Aorta (tissue), 5 donors: ENCODE measurements at regions of chr3 and their contacts with region 1.

Region 1: GRCh38 chr3:68033867-68034266 is 379.5 kb upstream of the SUCLG2 start:
- DNase-seq: no peak
- ATAC-seq: no peak
- H3K4me3 ChIP-seq: no peak overlapping the region
- H3K27ac ChIP-seq: no peak overlapping the region
- H3K4me1 ChIP-seq: peaks cover 3% of the 10 kb centered on the region in 2 donors
- H3K27me3 ChIP-seq: no peaks in the 10 kb centered on the region

Region 2: DNA sequence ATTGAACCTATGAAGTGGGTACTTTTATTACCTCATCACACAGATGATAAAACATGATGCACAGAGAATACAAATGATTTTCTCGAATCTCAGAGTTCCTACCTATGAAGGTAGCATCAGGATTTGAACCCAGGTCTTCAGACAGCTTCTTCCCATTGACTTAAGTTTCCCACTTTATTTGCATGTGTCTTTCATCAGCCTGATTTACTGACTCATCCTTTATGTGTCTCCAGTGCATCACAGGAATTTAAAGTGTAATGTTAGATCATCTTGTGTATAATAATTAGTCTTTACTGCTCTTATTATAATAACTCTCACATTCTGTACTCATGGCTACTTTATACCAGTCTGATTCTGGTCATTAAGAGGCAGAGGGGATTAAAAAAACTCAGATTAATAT is 69.9 kb after region 1 on chr3:
- intact Hi-C with region 1: loop called in 1 of 2 experiments (anchors 5 kb)
- DNase-seq: no peak
- ATAC-seq: no peak
- H3K4me3 ChIP-seq: no peak overlapping the region
- H3K27ac ChIP-seq: no peak overlapping the region
- H3K4me1 ChIP-seq: no peaks in the 10 kb centered on the region
- H3K27me3 ChIP-seq: no peaks in the 10 kb centered on the region